ENCODE measurements at regions of chr5 and their contacts with region 1.

Region 1: DNA sequence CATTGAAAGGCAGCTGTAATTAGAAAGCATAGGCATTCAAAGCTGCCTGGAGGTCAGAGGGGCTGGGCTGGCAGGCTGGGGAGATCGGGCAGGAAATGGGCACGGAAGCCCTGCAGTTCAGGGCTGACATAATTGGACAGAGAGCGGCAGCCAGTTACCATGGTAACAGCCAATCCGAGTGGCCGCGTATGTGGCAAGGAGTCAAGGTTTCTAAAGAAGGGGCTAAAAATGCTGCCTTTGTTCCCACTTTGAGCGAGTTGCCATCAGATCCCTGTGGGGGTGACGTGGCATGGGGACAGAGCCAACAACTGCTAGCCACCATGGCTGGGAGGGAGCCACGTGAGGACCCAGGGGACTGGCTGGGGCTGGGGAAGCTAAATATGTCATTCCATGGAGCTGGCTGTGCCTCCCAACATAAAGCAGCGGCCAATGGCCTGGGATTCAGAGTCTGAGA is 44.7 kb upstream of the NDFIP1 start:
- DNase-seq: peak; percentile 94

Region 2: DNA sequence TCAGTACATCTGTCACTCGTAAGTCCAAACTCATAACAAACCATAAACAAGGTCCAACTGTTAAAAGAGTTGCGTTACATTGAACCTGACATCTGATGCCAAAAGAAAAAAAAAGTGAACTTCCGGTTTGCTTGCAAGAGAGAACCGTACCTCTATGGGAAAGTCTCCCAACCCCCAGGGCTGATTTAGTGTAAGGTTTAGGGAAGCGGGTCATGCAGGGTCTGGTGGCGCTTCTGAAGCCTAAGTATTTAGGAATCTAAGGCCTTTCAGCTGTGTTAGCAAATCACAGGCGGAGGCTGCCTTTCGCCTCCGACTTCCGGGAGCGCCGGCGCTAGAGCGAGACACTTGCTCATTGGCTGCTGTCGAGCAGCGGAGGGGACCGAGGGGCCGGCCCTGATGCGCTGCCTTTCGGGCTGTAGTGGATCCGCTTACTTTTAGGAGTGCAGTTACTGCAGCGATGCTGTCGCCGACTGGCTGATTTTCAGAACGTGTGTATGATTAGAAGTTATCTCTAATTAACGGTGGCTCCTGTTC is 39.1 kb before region 1 on chr5:
- intact Hi-C with region 1: loop called in 1 of 2 experiments (anchors 5 kb)
- DNase-seq: peak; percentile 96

Region 3: DNA sequence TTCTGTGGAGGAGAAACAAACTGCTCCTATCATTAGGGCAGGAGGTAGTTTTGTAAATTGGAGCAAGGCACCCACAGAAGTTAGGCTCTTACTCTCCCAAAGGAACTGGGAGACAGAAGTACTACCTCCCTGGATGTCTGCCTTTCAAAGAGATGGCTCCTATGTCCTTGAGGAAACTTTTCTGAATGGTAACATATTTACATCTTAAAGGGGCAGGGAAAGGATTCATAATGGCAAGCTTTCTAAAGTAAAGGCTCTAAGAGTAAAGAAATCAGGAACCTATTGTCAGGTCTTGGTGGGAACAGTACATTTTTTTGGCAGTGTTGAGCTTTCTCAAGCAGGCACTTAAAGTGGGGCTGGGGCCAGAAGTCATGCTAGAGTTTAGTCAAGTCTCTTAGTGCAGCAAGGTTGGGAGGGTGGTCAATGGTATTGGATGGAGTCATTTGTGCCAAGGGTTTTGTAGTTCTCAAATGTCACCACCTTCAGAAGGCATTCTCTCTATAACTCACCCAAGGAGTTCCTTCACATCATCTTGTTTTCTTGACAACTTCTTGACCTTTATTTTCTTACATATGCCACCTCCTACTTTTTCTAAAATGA is 18.4 kb after region 1 on chr5:
- intact Hi-C with region 1: loop called in 1 of 2 experiments (anchors 1 kb)
- DNase-seq: no peak

Region 4: DNA sequence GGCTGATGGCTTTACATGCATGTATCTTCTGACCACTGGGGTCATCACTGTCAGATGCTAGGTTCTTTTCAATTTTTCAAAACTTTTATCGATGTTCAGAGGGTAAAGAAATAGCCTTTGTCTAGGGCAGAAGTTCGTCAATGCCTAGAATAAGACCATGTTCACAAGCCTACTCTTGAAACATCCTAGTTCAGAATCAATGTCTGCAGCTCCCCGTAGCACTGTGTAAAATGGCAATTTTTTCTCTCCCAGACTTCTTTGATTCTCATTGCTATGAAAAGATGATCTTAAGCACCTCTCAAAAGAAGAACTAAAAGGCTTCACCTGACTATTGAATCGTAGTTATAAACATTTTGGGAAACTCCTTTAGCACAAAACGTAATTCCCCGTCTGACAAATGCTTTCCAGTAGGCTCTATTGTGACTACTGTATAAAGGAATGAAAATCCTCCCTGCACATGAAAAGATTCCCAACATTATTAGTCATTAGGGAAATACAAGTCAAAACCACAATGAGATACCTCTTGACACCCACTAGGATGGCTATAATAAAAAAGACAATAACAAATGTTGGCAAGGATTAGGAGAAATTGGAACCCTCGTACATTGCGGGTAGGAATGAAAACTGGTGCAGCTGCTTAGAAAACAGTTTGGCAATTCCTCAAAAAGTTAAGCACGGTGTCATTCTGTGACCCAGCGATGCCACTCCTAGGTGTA is 969.8 kb after region 1 on chr5:
- intact Hi-C with region 1: loop called in 1 of 2 experiments (anchors 5 kb)
- DNase-seq: no peak